HepG2 (cell line): ENCODE measurements at regions of chr1 and their contacts with region 1.

Region 1: DNA sequence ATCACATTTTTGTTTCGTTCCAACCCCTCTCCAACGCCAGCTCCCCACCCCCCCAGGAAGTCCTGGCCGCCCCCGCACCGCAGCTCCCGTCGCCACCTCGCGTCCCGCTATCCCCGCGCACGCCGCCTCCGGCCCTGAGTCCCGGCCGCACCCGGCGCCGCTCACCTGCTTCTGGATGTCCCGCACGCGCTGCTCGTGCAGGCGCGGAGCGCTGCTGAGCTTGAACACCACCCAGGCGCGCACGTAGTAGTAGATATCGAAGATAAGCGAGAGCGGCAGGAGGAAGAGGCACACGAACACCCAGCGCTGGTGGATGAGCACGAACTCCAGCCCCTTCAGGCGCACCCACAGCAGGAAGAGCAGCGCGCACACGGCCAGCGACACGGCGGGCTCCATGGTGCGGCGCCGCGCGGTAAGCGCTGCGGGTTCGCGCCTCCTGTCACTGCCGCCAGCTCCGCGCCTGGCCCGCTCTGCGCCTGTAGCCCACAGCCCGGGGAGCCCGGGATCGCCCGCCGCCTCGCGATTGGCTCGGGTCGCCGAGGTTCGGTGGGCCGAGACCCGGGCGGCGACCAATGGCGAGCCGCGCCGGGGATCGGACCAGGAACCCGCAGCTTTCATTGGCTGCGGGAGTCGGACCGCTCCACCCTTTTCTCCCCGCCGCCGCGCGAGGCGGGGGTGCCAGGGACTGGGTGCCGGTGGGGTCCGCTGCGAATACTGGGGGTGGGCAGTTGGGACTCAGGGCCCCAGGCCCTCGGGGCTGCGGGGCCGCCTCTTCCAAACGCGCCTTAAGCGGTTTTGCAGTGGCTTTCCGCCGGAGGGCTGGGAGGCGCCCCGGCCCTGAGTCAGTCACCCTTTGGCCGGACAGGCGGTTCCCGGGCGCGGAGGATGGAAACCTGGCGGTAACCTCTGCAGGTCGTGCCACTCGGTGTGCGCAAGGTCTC is at the start of gene DHCR24:
- DNase-seq: peak; percentile 77
- ATAC-seq: peak; percentile 81
- H3K4me3 ChIP-seq: peak within 1 kb of the TSS; percentile 93 to 99 (median 98)
- H3K27ac ChIP-seq: peak within 1 kb of the TSS; percentile 99
- H3K4me1 ChIP-seq: peaks cover 73% of the 10 kb centered on the region
- H3K27me3 ChIP-seq: no peaks in the 10 kb centered on the region; a peak in 1 of 5 replicates
- CTCF ChIP-seq: no peak
- EP300 ChIP-seq: peak; percentile 38 to 65; a peak in 1 of 4 replicates
- POLR2A ChIP-seq: peak; percentile 94 to 99
- RAD21 ChIP-seq: peak; percentile 17
- total RNA-seq, gene DHCR24: 250 and 448 TPM in 2 replicates

Region 2: DNA sequence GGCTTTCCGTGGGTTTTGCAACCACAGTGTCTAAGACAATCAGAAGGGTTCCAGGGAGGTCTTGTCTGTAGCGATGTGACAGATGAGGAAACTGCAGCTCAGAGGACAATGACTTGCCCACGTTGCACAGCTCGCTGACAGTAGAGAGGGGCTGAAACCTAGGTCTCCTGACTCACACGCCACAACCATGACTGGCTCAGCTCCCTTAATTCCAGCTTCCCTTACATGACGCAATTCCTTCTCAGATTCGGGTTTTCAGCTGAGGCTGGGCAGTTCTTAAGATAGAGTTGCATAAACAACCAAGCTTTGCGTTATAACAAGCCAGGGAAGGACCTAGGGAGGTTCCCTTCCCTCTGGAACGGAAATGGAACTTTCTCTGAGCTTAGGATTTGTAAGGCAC is 36.3 kb before region 1 on chr1:
- CTCF ChIA-PET with region 1: no interaction called
- POLR2A ChIA-PET with region 1: interaction called, 54 read pairs
- in situ Hi-C with region 1: no loop called
- intact Hi-C with region 1: loop called (anchors 5 kb)
- DNase-seq: no peak
- ATAC-seq: no peak
- H3K4me3 ChIP-seq: no peak overlapping the region
- H3K27ac ChIP-seq: no peak overlapping the region
- H3K4me1 ChIP-seq: peaks cover 2% of the 10 kb centered on the region
- H3K27me3 ChIP-seq: no peaks in the 10 kb centered on the region
- CTCF ChIP-seq: no peak
- EP300 ChIP-seq: no peak
- POLR2A ChIP-seq: peak in 1 of 2 experiments; percentile 45; a peak in 1 of 4 replicates
- RAD21 ChIP-seq: no peak

Region 3: DNA sequence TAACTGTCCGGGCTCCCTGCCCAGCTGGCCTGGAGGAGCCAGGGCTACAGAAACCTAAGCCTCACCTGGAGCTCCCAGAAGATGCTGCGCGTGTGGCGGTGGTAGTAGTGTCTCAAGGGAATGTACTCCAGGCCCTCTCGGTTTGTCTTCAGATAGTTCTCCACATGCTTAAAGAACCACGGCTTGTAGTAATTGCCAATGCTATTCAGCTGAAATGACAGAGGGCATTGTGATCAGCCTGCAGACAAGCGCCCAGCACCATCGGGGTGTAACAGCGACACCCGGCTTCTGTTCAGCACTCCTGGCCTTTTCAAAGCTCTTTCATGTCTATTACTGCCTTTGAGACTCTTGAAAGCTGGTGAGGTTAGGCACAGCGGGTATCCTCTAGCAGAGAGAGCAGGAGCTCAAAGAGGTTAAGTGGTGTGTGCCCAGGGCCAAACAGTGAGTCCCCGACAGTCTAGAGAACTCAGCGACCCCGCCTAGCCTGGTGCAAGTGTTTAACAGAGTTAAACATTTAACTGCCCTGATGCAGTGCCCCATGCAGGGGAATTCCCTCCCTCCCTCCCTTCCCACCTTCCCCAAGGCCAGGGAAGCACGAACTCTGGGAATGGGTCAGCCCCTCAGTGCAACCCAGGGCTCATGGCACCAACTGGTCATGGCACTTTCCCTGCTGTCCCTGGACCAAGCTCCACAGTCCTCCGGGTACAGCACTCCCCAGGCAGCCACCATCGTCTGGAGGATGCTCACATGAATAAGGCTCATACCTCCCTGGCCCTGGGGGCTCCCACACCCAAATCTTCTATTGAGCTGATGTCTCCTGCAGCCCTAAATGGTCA is 21.5 kb before region 1 on chr1:
- CTCF ChIA-PET with region 1: interaction called, 3 read pairs
- POLR2A ChIA-PET with region 1: interaction called, 364 read pairs
- in situ Hi-C with region 1: no loop called
- intact Hi-C with region 1: loop called (anchors 2 kb)
- DNase-seq: peak; percentile 89
- ATAC-seq: peak; percentile 55
- H3K4me3 ChIP-seq: peak overlapping the region; percentile 47 to 59 (median 55); a peak in 5 of 6 replicates
- H3K27ac ChIP-seq: peak overlapping the region; percentile 90
- H3K4me1 ChIP-seq: peaks cover 100% of the 10 kb centered on the region
- H3K27me3 ChIP-seq: no peaks in the 10 kb centered on the region
- CTCF ChIP-seq: 0 out of 2 replicates have a peak, but pooled peaks have one; percentile 8
- EP300 ChIP-seq: peak in 1 of 2 experiments; percentile 63; a peak in 1 of 4 replicates
- POLR2A ChIP-seq: peak; percentile 56 to 57
- RAD21 ChIP-seq: 0 out of 2 replicates have a peak, but pooled peaks have one; percentile 14

Region 4: GRCh38 chr1:54919367-54920359 is 32.7 kb after region 1 on chr1:
- CTCF ChIA-PET with region 1: no interaction called
- POLR2A ChIA-PET with region 1: interaction called, 25 read pairs
- in situ Hi-C with region 1: no loop called
- intact Hi-C with region 1: loop called (anchors 1 kb)
- DNase-seq: peak; percentile 72
- ATAC-seq: peak; percentile 93
- H3K4me3 ChIP-seq: peak overlapping the region in 1 of 3 experiments; percentile 2; a peak in 1 of 6 replicates
- H3K27ac ChIP-seq: peak overlapping the region; percentile 53
- H3K4me1 ChIP-seq: peaks cover 68% of the 10 kb centered on the region
- H3K27me3 ChIP-seq: no peaks in the 10 kb centered on the region; a peak in 1 of 5 replicates
- CTCF ChIP-seq: no peak
- EP300 ChIP-seq: peak in 1 of 2 experiments; percentile 32; a peak in 1 of 4 replicates
- POLR2A ChIP-seq: no peak
- RAD21 ChIP-seq: no peak

Region 5: DNA sequence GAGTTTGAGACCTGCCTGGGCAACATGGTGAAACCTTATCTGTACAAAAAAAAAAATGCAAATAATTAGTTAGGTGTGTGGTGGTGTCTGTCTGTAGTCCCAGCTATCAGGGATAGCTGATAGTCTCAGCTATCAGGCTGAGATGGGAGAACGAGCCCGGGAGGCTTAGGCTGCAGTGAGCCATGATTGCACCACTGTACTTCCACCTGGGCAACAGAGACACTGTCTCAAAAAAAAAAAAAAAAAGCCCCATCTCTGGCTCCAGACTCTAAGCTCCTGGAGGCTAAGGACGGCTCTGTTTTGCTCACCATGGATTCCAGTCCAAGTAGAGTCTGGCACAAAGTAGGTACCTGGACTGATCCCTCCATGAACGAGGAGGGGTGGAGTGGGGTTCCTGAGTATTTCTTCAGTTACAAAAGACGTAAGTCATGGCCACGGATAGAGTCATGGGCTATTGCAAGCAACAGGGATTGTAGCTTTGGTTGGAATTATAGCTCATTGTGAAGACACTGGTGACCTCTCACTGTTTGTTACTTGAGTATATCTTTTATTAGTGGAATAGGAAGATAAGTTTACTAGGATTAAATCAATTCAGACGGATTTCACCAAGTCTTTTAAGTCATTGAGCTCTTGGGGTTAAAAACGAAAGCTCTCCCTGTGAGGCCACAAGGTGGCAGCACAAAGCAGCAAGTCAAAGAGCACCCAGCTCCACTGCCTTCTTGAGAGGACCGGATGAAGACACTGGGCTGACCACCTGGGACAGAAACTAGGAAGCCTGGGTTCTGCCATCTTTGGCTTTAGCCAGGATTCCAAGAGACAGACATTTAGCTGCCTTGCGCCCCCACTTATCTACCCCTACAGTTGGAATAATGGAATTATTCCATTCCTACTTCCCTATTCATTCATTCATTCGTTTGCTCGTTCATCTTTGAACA is 57.9 kb after region 1 on chr1:
- CTCF ChIA-PET with region 1: interaction called, 4 read pairs
- POLR2A ChIA-PET with region 1: interaction called, 36 read pairs
- in situ Hi-C with region 1: no loop called
- intact Hi-C with region 1: loop called (anchors 1 kb)
- DNase-seq: peak; percentile 70
- ATAC-seq: peak; percentile 82
- H3K4me3 ChIP-seq: peak overlapping the region; percentile 7 to 65 (median 56); a peak in 4 of 6 replicates
- H3K27ac ChIP-seq: no peak overlapping the region
- H3K4me1 ChIP-seq: peaks cover 21% of the 10 kb centered on the region
- H3K27me3 ChIP-seq: no peaks in the 10 kb centered on the region; a peak in 1 of 5 replicates
- CTCF ChIP-seq: peak; percentile 81
- EP300 ChIP-seq: no peak
- POLR2A ChIP-seq: no peak
- RAD21 ChIP-seq: peak; percentile 67

Region 6: GRCh38 chr1:54965624-54966340 is 78.8 kb after region 1 on chr1:
- CTCF ChIA-PET with region 1: no interaction called
- POLR2A ChIA-PET with region 1: no interaction called
- in situ Hi-C with region 1: no loop called
- intact Hi-C with region 1: no loop called
- DNase-seq: no peak
- ATAC-seq: no peak
- H3K4me3 ChIP-seq: no peak overlapping the region
- H3K27ac ChIP-seq: no peak overlapping the region
- H3K4me1 ChIP-seq: no peaks in the 10 kb centered on the region
- H3K27me3 ChIP-seq: peaks cover 2 to 20% of the 10 kb centered on the region in 2 experiments; a peak in 2 of 5 replicates
- CTCF ChIP-seq: no peak
- EP300 ChIP-seq: no peak
- POLR2A ChIP-seq: no peak
- RAD21 ChIP-seq: no peak